ENCODE measurements at regions of chr6 and their contacts with region 1.

Region 1: GRCh38 chr6:133916650-133917151 is 27.8 kb downstream of the TCF21 start:
- DNase-seq: peak; percentile 99
- ATAC-seq: peak; percentile 78
- H3K4me3 Mint-ChIP-seq: peak overlapping the region; percentile 53
- H3K27ac Mint-ChIP-seq: peak overlapping the region; percentile 92
- H3K4me1 Mint-ChIP-seq: peaks cover 27% of the 10 kb centered on the region
- H3K27me3 Mint-ChIP-seq: no peaks in the 10 kb centered on the region
- CTCF ChIP-seq: peak; percentile 92

Region 2: DNA sequence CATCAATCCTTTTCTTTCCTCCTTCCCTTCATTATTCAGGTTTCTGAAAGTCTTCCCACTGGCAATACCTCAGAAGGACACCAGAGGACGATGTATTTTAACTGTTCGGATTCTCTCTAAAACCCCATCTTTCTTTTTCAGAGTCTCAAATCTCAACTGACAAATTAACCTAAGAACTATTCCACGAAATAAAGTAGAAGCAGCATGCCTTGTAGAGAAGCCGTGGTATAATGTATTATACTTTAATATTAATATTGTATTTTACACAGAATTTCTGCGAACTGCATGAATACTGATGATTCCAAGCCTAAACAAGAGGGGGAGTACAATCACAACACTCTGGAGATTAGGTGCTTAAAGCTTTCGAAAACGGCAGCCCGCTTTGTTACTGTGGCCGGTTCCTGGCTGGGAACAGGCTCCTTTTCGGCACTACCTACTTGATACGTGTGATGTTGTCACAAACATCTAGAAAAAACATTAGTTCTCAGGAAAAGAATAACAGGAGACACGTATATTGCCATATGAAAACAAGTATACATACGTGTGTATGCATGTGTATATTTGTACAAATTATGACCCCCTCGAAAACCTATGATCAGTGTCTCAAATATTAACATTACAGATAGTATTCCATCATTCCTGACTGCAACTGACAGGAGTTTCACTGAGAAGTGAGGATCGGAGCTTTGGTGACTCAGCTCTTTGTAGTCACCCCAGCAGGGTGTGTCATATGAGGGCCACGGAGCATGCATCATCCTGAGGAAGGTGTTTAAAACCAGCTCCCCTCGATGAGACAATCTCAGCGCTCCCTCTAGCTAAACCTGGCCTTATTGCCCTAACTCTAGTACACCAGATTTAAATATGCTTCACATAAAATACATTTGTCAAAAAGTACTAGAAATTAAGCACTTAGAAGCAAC is 347.5 kb before region 1 on chr6:
- CTCF ChIA-PET with region 1: interaction called, 61 read pairs
- POLR2A ChIA-PET with region 1: no interaction called
- DNase-seq: peak; percentile 36
- ATAC-seq: peak; percentile 90
- H3K4me3 Mint-ChIP-seq: peak overlapping the region; percentile 77
- H3K27ac Mint-ChIP-seq: peak overlapping the region; percentile 92
- H3K4me1 Mint-ChIP-seq: peaks cover 7% of the 10 kb centered on the region
- H3K27me3 Mint-ChIP-seq: no peaks in the 10 kb centered on the region
- CTCF ChIP-seq: peak; percentile 78

Region 3: GRCh38 chr6:133891149-133891926 is 25.4 kb before region 1 on chr6:
- CTCF ChIA-PET with region 1: interaction called, 14 read pairs
- POLR2A ChIA-PET with region 1: no interaction called
- DNase-seq: peak; percentile 64
- ATAC-seq: peak; percentile 12
- H3K4me3 Mint-ChIP-seq: peak overlapping the region; percentile 70
- H3K27ac Mint-ChIP-seq: no peak overlapping the region
- H3K4me1 Mint-ChIP-seq: peaks cover 49% of the 10 kb centered on the region
- H3K27me3 Mint-ChIP-seq: peaks cover 100% of the 10 kb centered on the region
- CTCF ChIP-seq: no peak

Measured in WTC11 (cell line).